Natural killer cell (primary cell): ENCODE measurements at regions of chr15 and their contacts with region 1.

Region 1: GRCh38 chr15:74540761-74541493 is at the start of gene ARID3B:
- DNase-seq: peak; percentile 84 to 97
- ATAC-seq: peak; percentile 85 to 97 (median 92)
- H3K4me3 ChIP-seq: peak within 1 kb of the TSS; percentile 92
- H3K4me3 Mint-ChIP-seq: peak within 1 kb of the TSS; percentile 99
- H3K27ac ChIP-seq: peak within 1 kb of the TSS; percentile 82
- H3K27ac Mint-ChIP-seq: peak within 1 kb of the TSS; percentile 92 to 97
- H3K4me1 ChIP-seq: peaks cover 27% of the 10 kb centered on the region
- H3K4me1 Mint-ChIP-seq: peaks cover 51 to 58% of the 10 kb centered on the region in 2 donors
- H3K27me3 ChIP-seq: no peaks in the 10 kb centered on the region
- H3K27me3 Mint-ChIP-seq: no peaks in the 10 kb centered on the region
- CTCF ChIP-seq: no peak
- total RNA-seq, gene ARID3B: 56.4 to 59.2 (median 58.3) TPM

Region 2: GRCh38 chr15:74396445-74397238 is 144.3 kb before region 1 on chr15:
- intact Hi-C with region 1: no loop called
- DNase-seq: peak in 1 of 2 donors; percentile 50
- ATAC-seq: peak in 2 of 3 donors; percentile 26 to 38
- H3K4me3 ChIP-seq: no peak overlapping the region
- H3K4me3 Mint-ChIP-seq: no peak overlapping the region
- H3K27ac ChIP-seq: peak overlapping the region; percentile 85
- H3K27ac Mint-ChIP-seq: no peak overlapping the region
- H3K4me1 ChIP-seq: peaks cover 64% of the 10 kb centered on the region
- H3K4me1 Mint-ChIP-seq: peaks cover 24 to 53% of the 10 kb centered on the region in 2 donors
- H3K27me3 ChIP-seq: no peaks in the 10 kb centered on the region
- H3K27me3 Mint-ChIP-seq: no peaks in the 10 kb centered on the region
- CTCF ChIP-seq: no peak

Region 3: DNA sequence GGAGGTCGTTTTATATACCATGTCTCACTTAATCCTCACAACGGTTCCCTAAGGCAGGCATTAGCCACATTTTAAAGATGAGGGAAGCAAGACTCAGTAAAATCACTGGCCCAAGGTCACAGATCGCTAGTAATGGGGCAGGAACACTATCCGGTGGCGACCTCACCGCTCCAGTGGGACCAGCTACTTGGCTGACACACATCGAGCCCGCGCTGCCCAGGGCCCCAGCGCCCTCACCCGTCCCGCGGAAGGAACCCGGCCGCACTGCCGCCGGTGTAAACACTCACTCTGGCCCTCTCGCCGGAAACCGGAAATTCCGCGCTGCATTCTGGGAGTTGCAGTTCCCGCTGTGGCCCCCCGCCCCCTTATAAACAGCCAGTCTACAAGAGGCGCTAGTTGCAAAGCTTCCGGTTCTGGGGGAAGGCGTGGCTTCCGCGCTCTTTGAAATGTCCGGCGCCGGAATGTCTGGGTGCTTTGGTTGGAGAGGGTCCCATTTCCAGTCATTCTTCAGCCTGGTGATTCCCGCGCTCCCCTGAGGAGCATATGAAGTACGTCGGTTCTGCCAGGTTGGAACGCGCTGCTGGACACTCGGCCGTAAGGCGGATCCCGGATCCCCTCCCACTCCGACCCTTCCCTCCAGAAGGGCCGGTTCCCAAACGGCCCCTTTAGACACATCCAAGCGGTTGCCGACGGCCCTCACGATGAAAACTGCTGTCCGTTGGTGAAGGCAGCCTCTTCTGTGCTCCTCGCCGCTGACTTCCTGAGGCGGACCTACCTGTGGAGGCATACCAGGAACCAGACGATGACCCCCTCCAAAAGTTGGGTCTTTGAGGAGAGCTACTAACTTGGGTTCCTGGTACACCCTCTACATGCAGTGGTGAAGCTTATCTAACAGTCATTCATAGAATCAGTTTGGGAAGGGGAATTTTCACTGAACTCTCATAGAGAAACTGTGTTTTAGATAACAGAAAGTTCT is 79.8 kb before region 1 on chr15 and contains the start of gene UBL7:
- intact Hi-C with region 1: loop called (anchors 1 kb)
- DNase-seq: peak; percentile 93 to 96
- ATAC-seq: peak; percentile 98 to 99 (median 99)
- H3K4me3 ChIP-seq: peak within 1 kb of the TSS; percentile 90
- H3K4me3 Mint-ChIP-seq: peak within 1 kb of the TSS; percentile 86
- H3K27ac ChIP-seq: peak within 1 kb of the TSS; percentile 82
- H3K27ac Mint-ChIP-seq: peak within 1 kb of the TSS; percentile 87
- H3K4me1 ChIP-seq: peaks cover 14% of the 10 kb centered on the region
- H3K4me1 Mint-ChIP-seq: peaks cover 14 to 32% of the 10 kb centered on the region in 2 donors
- H3K27me3 ChIP-seq: no peaks in the 10 kb centered on the region
- H3K27me3 Mint-ChIP-seq: no peaks in the 10 kb centered on the region
- CTCF ChIP-seq: no peak
- total RNA-seq, gene UBL7: 25.1 to 38.7 (median 29.0) TPM

Region 4: DNA sequence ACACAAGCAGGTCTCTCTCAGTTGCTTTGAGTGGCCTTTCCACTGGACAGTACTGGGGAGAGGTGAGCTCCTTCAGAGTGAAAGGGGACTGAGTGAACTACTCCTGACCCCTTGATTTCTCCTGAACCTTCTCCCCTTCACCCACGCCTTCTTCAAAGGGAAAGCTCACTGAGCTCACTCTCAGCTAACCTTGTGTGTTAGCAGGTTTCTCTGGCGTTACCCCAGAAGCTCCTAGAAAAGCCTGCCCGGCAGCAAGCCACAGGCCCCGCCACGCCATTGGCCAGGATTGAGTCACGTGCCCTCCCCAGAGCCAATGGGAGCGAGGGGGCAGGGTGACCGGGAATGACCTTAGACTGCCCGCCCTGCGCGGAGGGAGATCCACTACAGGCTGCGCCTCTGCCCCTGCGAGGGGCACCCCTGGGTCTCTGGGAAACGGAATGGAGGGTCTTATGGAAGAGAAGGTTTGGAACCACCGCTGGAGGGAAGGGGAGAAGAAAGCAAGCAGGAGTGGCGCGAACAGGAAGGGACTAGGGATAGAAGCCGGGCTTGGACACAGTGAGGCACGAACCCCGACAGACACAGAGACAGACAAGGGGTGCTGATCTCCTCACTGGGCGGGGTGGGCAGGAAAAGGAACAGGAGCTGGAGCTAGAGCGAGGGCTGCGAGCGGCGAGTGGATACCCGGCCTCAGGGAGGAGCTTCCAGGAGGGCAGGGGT is 57.4 kb after region 1 on chr15:
- intact Hi-C with region 1: loop called (anchors 5 kb)
- DNase-seq: peak; percentile 90 to 94
- ATAC-seq: peak; percentile 98 to 99 (median 99)
- H3K4me3 ChIP-seq: peak overlapping the region; percentile 70
- H3K4me3 Mint-ChIP-seq: peak overlapping the region; percentile 100
- H3K27ac ChIP-seq: peak overlapping the region; percentile 74
- H3K27ac Mint-ChIP-seq: peak overlapping the region; percentile 96 to 97
- H3K4me1 ChIP-seq: peaks cover 22% of the 10 kb centered on the region
- H3K4me1 Mint-ChIP-seq: peaks cover 16 to 18% of the 10 kb centered on the region in 2 donors
- H3K27me3 ChIP-seq: no peaks in the 10 kb centered on the region
- H3K27me3 Mint-ChIP-seq: no peaks in the 10 kb centered on the region
- CTCF ChIP-seq: no peak

Region 5: GRCh38 chr15:74615508-74616365 is 74.8 kb after region 1 on chr15 and contains the start of gene CLK3:
- intact Hi-C with region 1: loop called (anchors 1 kb)
- DNase-seq: peak; percentile 97 to 98
- ATAC-seq: peak; percentile 76 to 88 (median 78)
- H3K4me3 ChIP-seq: peak within 1 kb of the TSS; percentile 89
- H3K4me3 Mint-ChIP-seq: peak within 1 kb of the TSS; percentile 94
- H3K27ac ChIP-seq: peak within 1 kb of the TSS; percentile 97
- H3K27ac Mint-ChIP-seq: peak within 1 kb of the TSS; percentile 94
- H3K4me1 ChIP-seq: peaks cover 46% of the 10 kb centered on the region
- H3K4me1 Mint-ChIP-seq: peaks cover 34 to 55% of the 10 kb centered on the region in 2 donors
- H3K27me3 ChIP-seq: no peaks in the 10 kb centered on the region
- H3K27me3 Mint-ChIP-seq: no peaks in the 10 kb centered on the region
- CTCF ChIP-seq: no peak
- total RNA-seq, gene CLK3: 288 to 298 (median 293) TPM